ENCODE measurements at regions of chr5 and their contacts with region 1.

Region 1: DNA sequence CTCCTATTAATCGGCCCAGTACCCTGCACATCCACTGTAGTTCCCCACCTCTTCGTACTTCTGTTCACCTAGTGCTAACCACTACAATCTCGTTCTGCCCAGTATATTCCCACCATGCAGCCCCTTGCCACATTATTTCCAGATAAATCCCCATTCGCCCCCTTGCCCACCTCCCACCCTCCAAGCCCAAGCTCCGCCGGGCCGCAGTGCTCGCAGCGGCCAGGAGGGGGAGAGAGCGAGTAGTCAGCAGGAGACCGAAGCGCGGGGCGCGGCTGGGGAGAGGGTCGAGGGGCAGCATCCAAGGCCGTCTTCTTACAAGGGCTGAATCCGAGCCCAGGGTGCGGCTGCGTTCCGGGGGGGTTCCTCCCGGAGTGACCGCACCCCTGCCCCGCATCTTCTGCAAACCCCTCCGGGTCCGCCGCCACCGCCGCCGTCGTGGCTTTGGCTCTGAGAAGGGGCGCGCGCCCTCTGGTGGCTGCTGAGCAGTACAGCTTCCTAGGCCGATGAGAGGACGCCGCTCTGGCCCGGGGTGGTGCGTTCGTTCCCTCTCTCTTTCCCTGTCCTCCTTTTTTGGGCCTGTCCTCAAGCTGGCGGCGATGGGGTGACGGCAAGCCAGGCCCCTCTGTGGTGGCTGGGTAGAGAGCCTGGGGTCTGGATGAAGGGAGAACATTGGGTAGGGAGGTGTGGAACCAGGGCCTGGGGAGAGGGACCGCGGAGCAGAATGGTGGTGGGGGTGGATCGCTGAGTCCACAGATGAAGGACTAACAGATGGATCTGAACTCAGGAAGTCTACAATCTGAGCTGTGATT is 30.0 kb upstream of the PSD2 start:
- DNase-seq: peak; percentile 63 to 96 (median 79)

Region 2: DNA sequence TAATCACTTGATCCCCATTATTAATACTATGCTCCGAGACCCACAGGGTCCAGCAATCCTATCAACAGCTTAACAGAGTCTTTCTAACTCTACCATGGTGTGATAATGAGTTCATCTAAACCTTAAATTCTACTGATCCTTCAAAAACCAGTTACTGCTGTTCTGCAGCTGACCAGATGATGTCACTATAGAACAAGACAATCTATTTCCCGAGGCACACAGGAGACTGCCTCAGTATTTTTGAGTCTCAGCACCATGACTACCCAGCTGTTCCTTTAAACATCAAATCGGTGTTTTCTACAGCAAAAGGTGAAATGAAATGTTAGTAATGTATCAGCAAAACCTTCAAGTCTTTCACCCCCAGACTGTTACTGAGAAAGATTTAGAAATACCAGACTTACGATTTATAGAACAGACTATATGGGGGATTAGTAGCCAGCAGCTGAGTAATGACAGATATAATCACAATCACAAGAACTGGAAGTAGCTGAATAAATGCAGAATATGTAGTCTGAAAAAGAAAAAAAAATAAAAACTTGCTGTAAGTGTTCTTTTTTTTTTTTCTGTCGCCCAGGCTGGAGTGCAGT is 343.2 kb before region 1 on chr5:
- intact Hi-C with region 1: loop called (anchors 5 kb)
- DNase-seq: no peak

Region 3: GRCh38 chr5:139696894-139697658 is 68.5 kb before region 1 on chr5:
- intact Hi-C with region 1: loop called (anchors 5 kb)
- DNase-seq: peak in 7 of 10 donors; percentile 64 to 95 (median 76)

Measured in posterior cingulate gyrus (tissue), 11 donors.